ENCODE measurements at regions of chr11 and their contacts with region 1.

Region 1: GRCh38 chr11:18548001-18548400 is 21.3 kb upstream of the TSG101 start:
- DNase-seq: no peak
- ATAC-seq: no peak
- H3K4me3 ChIP-seq: no peak overlapping the region
- H3K4me3 Mint-ChIP-seq: no peak overlapping the region
- H3K27ac ChIP-seq: no peak overlapping the region
- H3K27ac Mint-ChIP-seq: no peak overlapping the region
- H3K4me1 ChIP-seq: no peaks in the 10 kb centered on the region
- H3K4me1 Mint-ChIP-seq: no peaks in the 10 kb centered on the region
- H3K27me3 ChIP-seq: no peaks in the 10 kb centered on the region
- H3K27me3 Mint-ChIP-seq: no peaks in the 10 kb centered on the region
- CTCF ChIP-seq: no peak

Region 2: GRCh38 chr11:18501629-18502028 is 46.4 kb before region 1 on chr11:
- CTCF ChIA-PET with region 1: no interaction called
- POLR2A ChIA-PET with region 1: no interaction called
- intact Hi-C with region 1: loop called in 1 of 2 experiments (anchors 5 kb)
- DNase-seq: no peak
- ATAC-seq: no peak
- H3K4me3 ChIP-seq: no peak overlapping the region
- H3K4me3 Mint-ChIP-seq: no peak overlapping the region
- H3K27ac ChIP-seq: no peak overlapping the region
- H3K27ac Mint-ChIP-seq: no peak overlapping the region
- H3K4me1 ChIP-seq: no peaks in the 10 kb centered on the region
- H3K4me1 Mint-ChIP-seq: peaks cover 9% of the 10 kb centered on the region
- H3K27me3 ChIP-seq: no peaks in the 10 kb centered on the region
- H3K27me3 Mint-ChIP-seq: no peaks in the 10 kb centered on the region
- CTCF ChIP-seq: no peak

Region 3: DNA sequence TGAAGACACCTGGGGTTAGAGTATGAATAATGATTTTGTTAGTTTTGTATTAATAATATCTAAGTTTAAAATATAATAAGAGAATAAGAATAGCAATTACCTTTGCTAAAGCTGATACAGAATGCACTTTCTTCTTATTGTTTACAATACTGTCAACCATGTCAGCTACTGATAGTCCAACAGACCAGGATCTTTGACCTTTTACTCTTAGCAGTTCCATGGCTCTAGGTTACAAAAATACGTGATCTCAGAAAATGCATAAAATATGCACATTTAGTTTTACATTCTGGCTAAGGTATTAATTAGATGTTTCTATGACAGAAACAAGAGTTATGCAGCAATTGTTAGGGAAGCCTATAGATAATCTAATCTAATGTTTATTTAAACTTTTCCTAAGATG is 13.8 kb before region 1 on chr11:
- CTCF ChIA-PET with region 1: no interaction called
- POLR2A ChIA-PET with region 1: no interaction called
- intact Hi-C with region 1: no loop called
- DNase-seq: no peak
- ATAC-seq: no peak
- H3K4me3 ChIP-seq: no peak overlapping the region
- H3K4me3 Mint-ChIP-seq: no peak overlapping the region
- H3K27ac ChIP-seq: no peak overlapping the region
- H3K27ac Mint-ChIP-seq: no peak overlapping the region
- H3K4me1 ChIP-seq: no peaks in the 10 kb centered on the region
- H3K4me1 Mint-ChIP-seq: peaks cover 3% of the 10 kb centered on the region
- H3K27me3 ChIP-seq: no peaks in the 10 kb centered on the region
- H3K27me3 Mint-ChIP-seq: no peaks in the 10 kb centered on the region
- CTCF ChIP-seq: no peak